RWPE1 (cell line): ENCODE measurements at regions of chr1 and their contacts with region 1.

Region 1: GRCh38 chr1:206583707-206584648 is 28.3 kb downstream of the EIF2D start:
- DNase-seq: peak; percentile 67
- H3K27ac ChIP-seq: peak overlapping the region; percentile 36
- CTCF ChIP-seq: peak; percentile 75

Region 2: DNA sequence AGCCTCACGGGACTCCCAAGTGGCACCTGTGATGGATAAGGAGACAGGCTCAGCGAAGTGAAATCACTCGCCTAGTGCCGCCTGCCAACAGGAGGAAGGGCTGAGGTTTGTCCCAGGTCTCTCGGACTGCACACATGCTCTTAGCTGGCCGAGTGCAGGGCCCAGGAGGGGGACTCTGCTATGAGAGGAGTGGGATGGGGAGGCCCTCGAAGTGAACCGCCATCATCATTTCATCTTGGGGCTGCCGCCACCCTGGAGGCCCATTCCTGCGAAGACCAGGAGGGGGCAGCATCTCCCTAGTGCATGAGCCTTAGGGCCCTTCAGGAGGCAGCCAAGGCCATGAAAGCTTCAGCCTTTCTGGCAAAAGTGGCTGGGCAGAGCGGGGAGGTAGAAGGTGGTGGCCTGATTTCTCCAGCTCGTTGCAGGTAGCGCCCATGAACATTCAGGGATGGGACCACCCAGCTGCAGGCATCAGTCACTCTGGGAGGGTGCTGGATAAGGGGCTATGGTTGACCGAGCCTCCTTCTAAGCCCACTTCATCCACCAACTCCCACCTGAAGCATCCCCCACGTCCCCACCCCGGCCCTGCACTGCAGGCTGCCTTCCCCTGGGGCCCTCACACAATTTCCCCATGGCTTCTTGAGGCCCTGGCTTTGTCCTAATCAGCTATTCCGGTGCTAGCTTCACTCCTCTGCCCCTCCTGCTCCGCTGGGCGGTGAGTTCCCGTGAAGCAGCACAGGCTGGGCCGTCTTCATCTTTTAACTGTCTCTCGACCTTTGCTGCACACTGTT is 93.8 kb before region 1 on chr1:
- CTCF ChIA-PET with region 1: interaction called, 29 read pairs
- POLR2A ChIA-PET with region 1: no interaction called
- DNase-seq: peak; percentile 93
- H3K27ac ChIP-seq: no peak overlapping the region
- CTCF ChIP-seq: peak; percentile 95

Region 3: DNA sequence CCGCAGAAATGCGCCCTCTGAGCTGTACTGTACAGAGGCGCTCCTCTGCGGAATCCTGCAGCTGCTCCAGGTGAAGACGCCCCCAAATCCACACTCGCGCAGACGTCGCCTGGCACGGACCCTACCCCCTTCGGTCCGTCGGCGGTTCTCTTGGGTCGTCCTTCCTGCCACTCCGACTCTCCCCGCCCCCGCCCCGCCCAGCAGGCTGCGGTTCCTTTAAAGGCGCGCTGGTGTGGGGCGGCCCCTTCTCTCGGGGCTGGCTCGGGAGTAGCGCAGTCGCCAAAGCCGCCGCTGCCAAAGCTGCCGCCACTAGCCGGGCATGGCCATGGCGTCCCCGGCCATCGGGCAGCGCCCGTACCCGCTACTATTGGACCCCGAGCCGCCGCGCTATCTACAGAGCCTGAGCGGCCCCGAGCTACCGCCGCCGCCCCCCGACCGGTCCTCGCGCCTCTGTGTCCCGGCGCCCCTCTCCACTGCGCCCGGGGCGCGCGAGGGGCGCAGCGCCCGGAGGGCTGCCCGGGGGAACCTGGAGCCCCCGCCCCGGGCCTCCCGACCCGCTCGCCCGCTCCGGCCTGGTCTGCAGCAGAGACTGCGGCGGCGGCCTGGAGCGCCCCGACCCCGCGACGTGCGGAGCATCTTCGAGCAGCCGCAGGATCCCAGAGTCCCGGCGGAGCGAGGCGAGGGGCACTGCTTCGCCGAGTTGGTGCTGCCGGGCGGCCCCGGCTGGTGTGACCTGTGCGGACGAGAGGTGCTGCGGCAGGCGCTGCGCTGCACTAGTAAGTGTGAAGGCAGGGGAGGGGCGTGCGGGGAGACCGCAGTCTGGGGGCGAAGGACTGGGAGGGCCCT is 76.5 kb before region 1 on chr1 and contains the start of gene RASSF5:
- CTCF ChIA-PET with region 1: interaction called, 12 read pairs
- POLR2A ChIA-PET with region 1: no interaction called
- DNase-seq: peak; percentile 87
- H3K27ac ChIP-seq: peak within 1 kb of the TSS; percentile 76
- CTCF ChIP-seq: no peak

Region 4: GRCh38 chr1:206563367-206564207 is 20.4 kb before region 1 on chr1:
- CTCF ChIA-PET with region 1: interaction called, 13 read pairs
- POLR2A ChIA-PET with region 1: no interaction called
- DNase-seq: no peak
- H3K27ac ChIP-seq: no peak overlapping the region
- CTCF ChIP-seq: no peak

Region 5: DNA sequence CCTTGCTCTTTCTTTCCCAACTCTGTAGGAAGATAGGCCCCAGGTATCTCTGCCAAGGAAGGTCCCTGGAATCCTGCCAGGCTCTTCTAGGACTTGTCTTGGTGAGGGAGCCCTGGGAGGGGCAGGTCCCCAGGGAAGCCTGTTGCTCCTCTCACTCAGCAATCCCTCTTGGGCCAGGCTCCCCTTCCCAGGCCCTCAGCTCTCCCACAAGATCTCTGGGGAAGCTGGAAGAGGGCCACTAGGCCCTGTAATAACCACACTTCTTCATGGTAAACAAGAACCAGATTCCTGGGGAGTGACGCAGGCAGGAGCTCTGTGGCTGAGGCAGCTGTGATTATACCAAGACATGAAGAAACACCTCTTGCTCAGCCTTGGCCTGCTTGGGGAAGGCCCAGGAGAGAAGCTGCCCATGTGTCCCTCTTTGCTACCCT is 90.8 kb after region 1 on chr1:
- CTCF ChIA-PET with region 1: no interaction called
- POLR2A ChIA-PET with region 1: no interaction called
- DNase-seq: peak; percentile 95
- H3K27ac ChIP-seq: peak overlapping the region; percentile 84
- CTCF ChIP-seq: no peak

Region 6: DNA sequence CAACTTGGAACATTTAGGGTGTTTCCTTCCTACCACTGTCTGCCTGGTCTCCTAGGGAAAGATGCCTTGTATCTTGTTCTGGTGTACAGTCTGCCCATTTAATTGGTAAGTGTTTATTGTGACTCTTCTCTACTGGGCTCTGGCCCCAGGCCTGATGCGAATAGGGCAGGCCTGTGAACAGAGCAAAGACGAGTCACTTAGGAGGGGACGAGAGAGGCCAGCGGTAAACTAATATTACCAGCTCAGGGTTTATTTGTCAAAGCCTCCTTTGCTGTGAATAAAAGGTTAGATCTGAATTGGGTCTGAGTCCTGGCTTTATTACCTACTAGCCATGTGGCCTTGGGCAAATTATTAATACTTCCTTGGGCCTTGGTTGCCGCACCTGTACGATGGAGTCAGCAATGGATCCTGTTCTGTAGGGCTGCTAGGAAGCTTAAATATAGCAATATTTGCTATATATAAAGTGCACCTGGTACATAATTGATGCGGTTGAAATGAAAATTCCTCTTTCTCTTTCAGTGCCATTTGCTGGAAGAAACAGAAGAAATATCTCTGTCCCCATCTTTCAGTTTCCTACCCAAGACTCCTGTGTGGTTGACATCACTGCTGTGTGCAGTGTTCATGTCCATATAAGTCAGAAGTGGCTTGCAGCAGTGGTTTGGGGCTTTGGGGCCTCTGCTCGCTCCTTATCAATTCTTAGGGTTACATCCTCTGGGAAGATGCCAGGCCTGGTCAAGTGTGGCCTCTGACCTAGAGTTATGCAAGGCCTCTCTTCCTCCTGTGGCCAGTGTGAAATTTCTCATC is 133.1 kb after region 1 on chr1:
- CTCF ChIA-PET with region 1: no interaction called
- POLR2A ChIA-PET with region 1: no interaction called
- DNase-seq: no peak
- H3K27ac ChIP-seq: no peak overlapping the region
- CTCF ChIP-seq: no peak